ENCODE measurements at regions of chr3 and their contacts with region 1.

Region 1: DNA sequence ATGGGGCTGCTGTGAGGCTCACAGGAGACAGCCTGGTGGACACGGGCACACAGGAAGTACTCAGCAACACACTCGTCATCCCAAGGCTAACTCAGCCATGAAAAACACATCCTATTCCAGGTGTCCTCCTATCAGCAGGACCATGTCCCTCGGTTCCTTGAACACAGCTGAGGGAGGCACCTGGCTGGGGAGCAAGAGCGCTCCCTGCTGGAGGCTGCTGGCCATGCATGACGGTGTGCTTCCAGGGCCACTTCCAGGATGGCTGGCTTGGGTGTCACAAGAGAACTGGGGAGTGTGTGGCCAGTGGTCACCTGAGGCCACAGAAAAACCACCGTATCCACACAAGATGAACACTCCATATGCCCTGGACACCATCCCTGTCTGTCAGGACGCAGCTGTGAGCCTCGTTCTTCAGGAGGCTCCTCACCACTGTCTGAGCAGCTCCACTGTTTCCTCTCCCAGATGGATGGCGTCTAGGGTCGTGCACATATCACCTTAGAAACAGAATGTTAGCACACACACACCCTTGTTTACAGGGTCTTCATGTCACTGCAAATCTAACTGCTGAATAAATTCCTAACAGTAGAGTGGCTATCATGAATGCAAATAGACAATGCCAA is 31.0 kb downstream of the POC1A start:
- DNase-seq: peak; percentile 87
- H3K4me3 ChIP-seq: no peak overlapping the region; a peak in 1 of 4 replicates
- H3K27ac ChIP-seq: peak overlapping the region in 1 of 2 experiments; percentile 83; a peak in 2 of 4 replicates
- H3K4me1 ChIP-seq: peaks cover 5 to 33% of the 10 kb centered on the region in 2 experiments; a peak in 2 of 4 replicates
- H3K27me3 ChIP-seq: no peaks in the 10 kb centered on the region
- CTCF ChIP-seq: peak; percentile 96
- EP300 ChIP-seq: no peak
- RAD21 ChIP-seq: peak; percentile 97

Region 2: DNA sequence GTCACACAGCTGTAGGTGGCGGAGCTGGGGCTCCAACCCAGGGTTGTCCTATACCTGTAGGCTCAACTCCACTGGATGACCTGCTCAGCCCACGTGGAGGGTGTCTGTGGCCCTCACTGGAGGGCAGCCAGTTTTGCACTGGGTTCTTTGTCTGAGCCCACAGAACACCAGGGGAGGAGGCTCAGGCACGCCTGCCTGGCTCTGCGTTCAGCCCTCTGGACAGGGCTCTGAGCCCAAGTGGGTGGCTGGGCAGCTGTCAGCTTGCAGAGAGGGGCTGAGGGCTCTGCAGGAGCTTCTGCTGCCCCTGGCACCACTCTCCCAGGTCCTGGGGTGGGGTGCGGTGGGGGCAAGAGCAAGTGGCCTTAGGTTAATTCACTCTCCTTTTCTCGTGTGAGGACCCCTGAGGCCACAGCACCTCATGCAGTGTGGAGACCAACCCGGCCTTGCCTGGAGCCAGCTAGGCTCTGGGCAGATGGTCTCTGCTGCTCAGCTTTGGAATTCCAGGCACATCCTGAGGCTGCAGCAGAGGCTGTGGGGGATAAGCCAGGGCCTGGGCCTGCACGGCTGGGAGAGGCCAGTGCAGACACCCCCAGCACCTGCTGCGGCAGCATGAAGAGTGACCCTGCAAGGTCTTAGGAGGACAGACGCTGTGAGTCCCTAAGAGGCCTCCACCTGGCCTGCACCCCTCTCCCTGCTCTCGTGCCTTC is 90.4 kb before region 1 on chr3:
- CTCF ChIA-PET with region 1: interaction called, 11 read pairs
- POLR2A ChIA-PET with region 1: interaction called, 6 read pairs
- DNase-seq: no peak
- H3K4me3 ChIP-seq: no peak overlapping the region; a peak in 1 of 4 replicates
- H3K27ac ChIP-seq: peak overlapping the region in 1 of 2 experiments; percentile 100; a peak in 2 of 4 replicates
- H3K4me1 ChIP-seq: peaks cover 0 to 96% of the 10 kb centered on the region in 2 experiments; a peak in 2 of 4 replicates
- H3K27me3 ChIP-seq: no peaks in the 10 kb centered on the region
- CTCF ChIP-seq: no peak
- EP300 ChIP-seq: peak in 1 of 2 experiments; percentile 57; a peak in 2 of 4 replicates
- RAD21 ChIP-seq: 0 out of 2 replicates have a peak, but pooled peaks have one; percentile 12

Region 3: GRCh38 chr3:52046186-52046913 is 76.9 kb before region 1 on chr3:
- CTCF ChIA-PET with region 1: interaction called, 189 read pairs
- POLR2A ChIA-PET with region 1: interaction called, 22 read pairs
- DNase-seq: peak; percentile 58
- H3K4me3 ChIP-seq: 0 out of 4 replicates have a peak overlapping the region, but pooled peaks of 1 of the 2 experiments have one; percentile 36
- H3K27ac ChIP-seq: peak overlapping the region; percentile 93 to 100
- H3K4me1 ChIP-seq: peaks cover 31 to 87% of the 10 kb centered on the region in 2 experiments
- H3K27me3 ChIP-seq: no peaks in the 10 kb centered on the region
- CTCF ChIP-seq: no peak
- EP300 ChIP-seq: peak in 1 of 2 experiments; percentile 65; a peak in 1 of 4 replicates
- RAD21 ChIP-seq: no peak

Region 4: GRCh38 chr3:52108302-52109232 is 14.6 kb before region 1 on chr3:
- CTCF ChIA-PET with region 1: interaction called, 74 read pairs
- POLR2A ChIA-PET with region 1: interaction called, 5 read pairs
- DNase-seq: peak; percentile 75
- H3K4me3 ChIP-seq: no peak overlapping the region
- H3K27ac ChIP-seq: peak overlapping the region in 1 of 2 experiments; percentile 96; a peak in 2 of 4 replicates
- H3K4me1 ChIP-seq: peaks cover 0 to 37% of the 10 kb centered on the region in 2 experiments; a peak in 2 of 4 replicates
- H3K27me3 ChIP-seq: no peaks in the 10 kb centered on the region
- CTCF ChIP-seq: no peak
- EP300 ChIP-seq: peak in 1 of 2 experiments; percentile 50; a peak in 1 of 4 replicates
- RAD21 ChIP-seq: no peak; the same call in 1 of the 2 replicates

Region 5: GRCh38 chr3:52144034-52144795 is 21.0 kb after region 1 on chr3:
- CTCF ChIA-PET with region 1: interaction called, 48 read pairs
- POLR2A ChIA-PET with region 1: no interaction called
- DNase-seq: peak; percentile 92
- H3K4me3 ChIP-seq: peak overlapping the region in 1 of 2 experiments; percentile 9; a peak in 1 of 4 replicates
- H3K27ac ChIP-seq: peak overlapping the region in 1 of 2 experiments; percentile 77; a peak in 2 of 4 replicates
- H3K4me1 ChIP-seq: peaks cover 0 to 13% of the 10 kb centered on the region in 2 experiments; a peak in 1 of 4 replicates
- H3K27me3 ChIP-seq: no peaks in the 10 kb centered on the region
- CTCF ChIP-seq: peak; percentile 89
- EP300 ChIP-seq: no peak
- RAD21 ChIP-seq: peak; percentile 95

Measured in SK-N-SH (cell line).